BJ (cell line): ENCODE measurements at regions of chr22 and their contacts with region 1.

Region 1: GRCh38 chr22:30386960-30387827 is at the start of gene RNF215:
- DNase-seq: no peak
- H3K4me3 ChIP-seq: peak within 1 kb of the TSS; percentile 76
- H3K27me3 ChIP-seq: no peaks in the 10 kb centered on the region
- CTCF ChIP-seq: peak; percentile 82
- polyA plus RNA-seq, gene RNF215: 11.1 and 15.8 TPM in 2 replicates

Region 2: DNA sequence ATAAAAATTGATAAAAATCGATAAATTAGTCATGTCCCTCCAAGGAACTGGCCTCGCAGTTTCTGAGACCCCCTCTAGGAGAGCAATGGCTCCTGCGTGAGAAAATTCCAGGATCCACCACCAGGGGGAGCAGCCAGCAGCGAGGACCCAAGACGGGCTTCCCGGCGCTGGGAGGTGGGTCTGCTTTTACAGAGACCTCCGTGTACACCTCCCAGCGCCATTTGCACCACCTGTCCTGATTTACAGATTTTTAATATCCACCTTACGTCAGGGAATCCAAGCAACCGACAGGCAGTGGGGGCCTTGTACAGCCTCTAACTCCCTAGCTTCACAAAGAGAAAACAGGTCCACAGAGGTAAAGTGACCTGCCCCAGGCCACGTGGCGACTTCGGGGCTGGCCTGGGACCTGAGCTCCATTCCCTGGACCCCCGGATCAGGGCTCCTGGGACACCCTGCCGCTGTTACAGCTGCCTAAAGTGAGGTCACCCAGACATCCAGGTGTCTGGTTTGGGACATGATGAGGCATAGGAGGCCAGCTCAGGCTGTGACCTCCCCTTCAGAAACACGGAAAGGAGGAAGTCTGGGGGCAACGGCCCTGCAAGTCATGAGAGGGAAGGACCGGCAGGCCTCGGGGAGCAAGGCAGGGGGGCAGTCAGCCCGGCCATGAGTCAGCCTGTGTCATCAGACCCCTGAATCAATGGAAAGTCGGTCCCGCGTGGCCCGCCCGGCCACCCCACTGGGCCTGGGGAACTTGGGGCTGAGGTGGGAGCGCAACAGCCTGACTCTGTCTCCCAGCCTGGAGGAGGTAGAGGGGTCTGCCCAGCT is 124.1 kb before region 1 on chr22:
- CTCF ChIA-PET with region 1: interaction called, 34 read pairs
- POLR2A ChIA-PET with region 1: interaction called, 3 read pairs
- DNase-seq: no peak
- H3K4me3 ChIP-seq: no peak overlapping the region
- H3K27me3 ChIP-seq: no peaks in the 10 kb centered on the region; the same call in 1 of the 2 replicates
- CTCF ChIP-seq: peak; percentile 95

Region 3: DNA sequence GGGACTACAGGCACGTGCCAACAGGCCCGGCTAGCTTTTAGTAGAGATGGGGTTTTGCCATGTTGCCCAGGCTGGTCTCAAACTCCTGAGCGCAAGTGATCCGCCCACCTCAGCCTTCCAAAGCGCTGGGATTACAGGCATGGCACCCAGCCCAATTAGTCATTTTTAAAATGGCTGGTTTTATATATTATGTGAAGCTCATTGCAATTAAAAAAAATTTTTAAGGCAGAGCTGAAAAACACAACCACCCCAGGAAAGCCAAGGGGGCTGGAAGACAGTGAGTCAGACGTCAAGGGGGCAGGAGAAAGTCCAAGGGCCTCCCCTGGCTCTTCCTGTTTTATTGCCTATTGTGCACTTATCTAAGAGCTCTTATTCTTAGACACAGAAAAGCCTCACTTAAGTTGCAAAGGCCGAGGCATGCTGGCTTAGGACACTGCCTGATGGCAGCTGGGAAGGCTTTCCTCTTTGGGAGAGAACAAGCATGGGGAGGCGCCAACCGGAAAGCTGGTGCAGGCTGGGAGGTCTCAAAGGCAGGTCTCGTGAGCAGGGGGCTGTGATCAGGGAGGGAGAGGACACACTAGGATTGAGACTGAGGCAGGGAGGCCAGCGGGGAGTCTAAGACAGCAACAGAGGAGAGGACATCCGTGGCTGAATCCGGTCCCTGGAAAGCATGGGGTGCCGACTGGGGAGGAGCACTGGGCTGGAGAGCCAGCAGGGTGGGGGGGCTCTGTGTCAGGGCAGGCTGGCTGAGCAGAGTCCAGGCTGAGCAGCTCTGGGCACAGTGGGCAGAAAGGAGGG is 109.4 kb before region 1 on chr22:
- CTCF ChIA-PET with region 1: interaction called, 204 read pairs
- POLR2A ChIA-PET with region 1: no interaction called
- DNase-seq: no peak
- H3K4me3 ChIP-seq: no peak overlapping the region
- H3K27me3 ChIP-seq: peaks cover 5% of the 10 kb centered on the region
- CTCF ChIP-seq: no peak

Region 4: GRCh38 chr22:30485362-30485988 is 98.3 kb after region 1 on chr22:
- CTCF ChIA-PET with region 1: interaction called, 63 read pairs
- POLR2A ChIA-PET with region 1: no interaction called
- DNase-seq: no peak
- H3K4me3 ChIP-seq: no peak overlapping the region
- H3K27me3 ChIP-seq: peaks cover 3% of the 10 kb centered on the region; the same call in 1 of the 2 replicates
- CTCF ChIP-seq: peak; percentile 97